AG04449 (cell line): ENCODE measurements at regions of chr6 and their contacts with region 1.

Region 1: DNA sequence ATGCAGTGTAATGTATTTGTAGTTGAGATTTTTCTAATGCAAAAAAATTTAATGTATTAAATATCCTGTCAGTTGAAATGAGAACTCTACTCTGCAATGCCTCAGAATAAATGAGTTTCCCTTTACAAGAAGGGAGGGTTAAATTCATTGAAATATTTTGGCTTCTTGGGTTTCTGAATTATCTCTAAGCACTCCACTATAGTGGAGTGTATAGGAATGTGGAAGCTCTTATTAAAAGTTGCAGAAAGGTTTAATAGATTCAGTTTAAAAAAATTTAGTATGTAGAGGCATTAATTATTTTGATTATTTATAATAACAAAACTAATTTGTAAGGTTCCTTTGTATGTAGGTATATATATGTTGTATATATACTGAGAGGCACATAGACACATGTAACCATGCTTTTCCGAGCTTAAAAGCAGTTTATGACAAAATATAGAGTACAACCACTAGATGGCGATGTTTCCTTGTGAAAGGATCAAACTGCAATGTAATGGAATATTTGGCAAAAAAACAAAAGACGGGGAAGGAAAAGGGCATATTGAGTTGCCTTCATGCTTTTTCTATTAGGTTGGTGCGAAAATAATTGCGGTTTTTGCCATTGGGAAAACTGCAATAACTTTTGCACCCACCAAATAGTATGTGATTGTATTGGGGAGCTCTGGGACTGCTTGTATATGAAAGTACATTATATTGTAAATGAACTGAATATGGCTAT is 144.2 kb downstream of the MYO6 start:
- DNase-seq: peak; percentile 28
- H3K4me3 ChIP-seq: no peak overlapping the region
- CTCF ChIP-seq: peak; percentile 46

Region 2: DNA sequence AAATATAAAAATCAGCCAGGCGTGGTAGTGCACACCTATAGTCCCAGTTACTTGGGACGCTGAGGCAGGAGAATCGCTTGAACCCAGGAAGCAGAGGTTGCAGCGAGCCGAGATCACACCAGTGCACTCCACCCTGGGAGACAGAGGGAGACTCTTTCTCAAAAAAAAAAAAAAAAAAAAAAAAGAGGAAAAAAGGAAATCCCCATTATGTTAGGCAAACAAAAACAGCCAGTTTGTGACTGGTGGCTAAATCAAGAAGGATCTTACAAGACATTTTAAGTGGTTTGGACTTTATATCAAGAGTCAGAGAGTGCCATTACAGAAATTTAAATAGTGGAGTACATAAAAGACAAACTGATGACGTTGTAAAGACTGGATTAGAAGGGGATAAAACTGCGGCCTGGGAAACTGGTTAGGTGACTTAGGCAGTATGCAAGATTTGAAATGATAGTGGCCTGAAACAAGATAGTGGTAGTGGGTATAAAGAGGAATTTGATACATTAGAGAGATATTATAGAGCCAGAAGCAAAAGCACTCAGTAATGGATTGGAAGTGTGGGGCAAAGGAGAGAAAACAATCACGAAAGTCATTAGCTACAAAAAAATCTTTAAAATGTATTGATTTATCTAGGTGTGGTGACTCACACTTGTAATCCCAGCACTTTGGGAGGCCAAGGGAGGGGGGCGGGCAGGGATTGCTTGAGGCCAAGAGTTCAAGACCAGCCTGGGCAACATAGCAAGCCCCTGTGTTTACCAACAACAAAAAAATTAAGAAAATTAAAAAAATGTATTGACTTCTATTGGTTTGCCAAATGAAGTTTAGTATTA is 145.9 kb before region 1 on chr6:
- CTCF ChIA-PET with region 1: no interaction called
- POLR2A ChIA-PET with region 1: no interaction called
- DNase-seq: no peak
- H3K4me3 ChIP-seq: no peak overlapping the region
- CTCF ChIP-seq: no peak

Region 3: DNA sequence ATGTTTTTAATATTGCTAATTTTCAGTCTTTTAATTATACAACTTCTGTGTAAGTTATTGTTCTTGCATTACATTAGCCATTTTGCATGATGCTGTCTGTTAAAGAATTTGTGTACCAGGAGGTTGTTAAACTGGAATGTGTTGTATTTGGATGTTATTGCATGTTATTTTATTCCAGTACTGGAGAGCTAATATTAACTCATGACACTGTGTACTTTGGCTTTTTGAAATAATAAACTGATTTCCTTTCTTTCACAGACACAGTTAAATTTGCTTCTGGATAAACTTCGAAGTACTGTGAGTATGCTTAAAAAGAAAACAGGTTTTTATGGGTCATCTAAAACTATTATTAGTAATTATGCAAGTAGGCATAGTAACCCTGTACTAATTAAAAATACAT is 22.8 kb before region 1 on chr6:
- CTCF ChIA-PET with region 1: interaction called, 56 read pairs
- POLR2A ChIA-PET with region 1: no interaction called
- DNase-seq: no peak
- H3K4me3 ChIP-seq: no peak overlapping the region
- CTCF ChIP-seq: no peak

Region 4: DNA sequence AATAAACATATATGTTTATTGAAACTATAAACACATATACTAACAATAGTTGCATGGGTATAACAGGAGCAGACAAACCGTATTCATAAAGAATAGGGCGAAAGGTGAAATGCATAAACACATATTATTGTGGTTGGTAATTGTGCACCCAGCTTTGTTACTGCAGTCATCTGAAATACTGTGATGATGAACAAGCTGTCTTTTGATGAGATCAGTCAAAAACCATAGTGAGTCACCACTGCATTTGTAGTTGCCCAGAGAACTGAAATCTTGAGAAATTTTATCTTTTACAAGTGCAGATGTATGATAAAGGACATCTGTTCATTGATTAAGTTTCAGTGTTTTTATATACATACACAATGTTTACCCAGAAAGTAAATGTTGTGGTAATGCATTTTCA is 10.5 kb before region 1 on chr6:
- CTCF ChIA-PET with region 1: interaction called, 56 read pairs
- POLR2A ChIA-PET with region 1: no interaction called
- DNase-seq: peak; percentile 19
- H3K4me3 ChIP-seq: no peak overlapping the region
- CTCF ChIP-seq: no peak

Region 5: DNA sequence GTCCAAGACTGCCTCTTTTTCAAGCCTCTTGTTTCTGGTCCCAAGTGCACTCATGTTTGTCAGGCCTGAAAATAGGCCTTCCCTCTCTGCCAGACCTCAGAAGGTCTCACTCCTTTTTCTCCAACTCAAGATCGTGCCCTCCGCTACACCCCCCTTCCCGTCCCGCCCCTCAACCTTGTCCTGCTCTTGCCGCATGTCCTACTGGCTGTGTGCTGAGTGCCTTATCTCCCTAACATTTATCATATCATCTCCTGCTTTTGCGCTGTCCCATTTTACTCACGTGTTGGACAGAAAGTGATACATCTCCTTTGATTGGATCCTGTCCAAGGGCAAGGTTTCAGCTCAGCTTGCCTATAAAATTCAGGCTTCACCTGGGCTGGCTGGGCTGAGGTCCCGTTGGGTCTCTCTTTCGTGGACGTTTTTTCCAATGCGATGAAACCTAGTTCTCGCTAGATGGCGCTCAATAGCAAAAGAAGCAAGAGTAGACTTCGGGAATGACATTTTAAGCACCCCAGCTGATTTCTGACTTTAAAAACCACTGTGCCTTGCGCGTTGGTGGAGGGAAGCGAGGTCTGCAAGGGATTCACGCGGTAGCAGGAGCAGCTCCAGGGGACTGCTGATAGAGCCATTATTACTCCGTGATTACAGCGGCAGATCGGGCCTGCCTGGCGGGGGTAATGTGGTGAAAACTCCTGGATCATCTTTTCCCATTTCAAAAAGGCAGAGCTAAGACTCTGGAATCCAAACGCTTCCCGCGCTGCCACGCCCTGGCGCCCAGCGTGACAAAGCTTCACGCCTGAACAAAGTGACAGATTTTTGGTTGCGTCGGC is 41.6 kb after region 1 on chr6:
- CTCF ChIA-PET with region 1: interaction called, 60 read pairs
- POLR2A ChIA-PET with region 1: no interaction called
- DNase-seq: peak; percentile 24
- H3K4me3 ChIP-seq: peak overlapping the region; percentile 60
- CTCF ChIP-seq: peak; percentile 69